Dorsolateral prefrontal cortex (tissue), 120 donors: ENCODE measurements at regions of chr11 and their contacts with region 1.

Region 1: GRCh38 chr11:65569973-65570918 is at the start of gene ZNRD2:
- DNase-seq: peak; percentile 97 to 99 (median 99)
- H3K4me3 ChIP-seq: peak within 1 kb of the TSS; percentile 68 to 99 (median 92)
- H3K27ac ChIP-seq: peak within 1 kb of the TSS; percentile 85 to 99 (median 96)
- H3K27me3 ChIP-seq: no peaks in the 10 kb centered on the region
- CTCF ChIP-seq: peak in 55 of 56 donors; percentile 44 to 84 (median 65)
- total RNA-seq, gene ZNRD2: 22.6 to 74.8 (median 38.1) TPM

Region 2: GRCh38 chr11:65261591-65262380 is 308.5 kb before region 1 on chr11 and contains the start of gene POLA2:
- intact Hi-C with region 1: no loop called
- DNase-seq: peak; percentile 79 to 93 (median 89)
- H3K4me3 ChIP-seq: peak within 1 kb of the TSS; percentile 52 to 98 (median 82)
- H3K27ac ChIP-seq: peak within 1 kb of the TSS; percentile 68 to 99 (median 92)
- H3K27me3 ChIP-seq: no peaks in the 10 kb centered on the region
- CTCF ChIP-seq: peak in 24 of 56 donors; percentile 0 to 52 (median 22)
- total RNA-seq, gene POLA2: 4.5 to 16.1 (median 8.9) TPM

Region 3: DNA sequence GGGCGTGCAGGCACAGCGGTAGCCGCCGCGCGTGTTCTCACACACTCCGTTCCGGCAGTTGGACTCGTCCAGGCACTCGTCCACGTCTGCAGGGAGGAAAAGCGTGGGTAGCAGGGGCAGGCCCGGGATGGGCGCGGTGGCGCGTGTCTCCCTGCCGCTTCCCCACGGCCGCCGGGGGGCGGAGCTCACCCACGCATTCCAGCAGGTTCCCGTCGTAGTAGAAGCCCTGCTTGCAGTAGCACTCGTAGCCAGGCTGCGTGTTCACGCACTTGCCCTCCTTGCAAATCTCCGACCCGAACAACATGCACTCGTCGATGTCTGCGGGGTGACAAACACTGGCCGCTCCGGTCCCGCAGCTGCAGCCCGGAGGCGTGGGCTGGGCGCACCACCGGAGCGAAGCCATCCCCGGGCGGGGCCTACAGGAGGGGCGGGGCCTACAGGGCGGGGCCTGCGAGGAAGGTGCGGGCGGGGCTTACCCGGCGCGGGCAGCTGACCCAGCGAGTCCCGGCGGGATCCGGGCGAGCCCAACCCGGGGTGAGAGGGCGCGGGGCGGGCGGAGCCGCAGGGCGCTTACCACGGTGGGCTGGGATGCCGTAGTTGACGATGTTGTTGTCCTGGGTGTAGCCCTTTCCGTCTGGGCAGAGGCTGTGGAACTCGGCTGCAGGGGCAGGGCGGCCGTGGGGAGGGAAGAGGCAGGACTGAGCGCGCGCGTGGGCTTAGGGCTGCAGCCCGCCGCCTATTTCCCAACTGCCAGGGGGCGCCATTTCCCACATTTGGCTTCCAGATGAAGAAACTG is 29.8 kb before region 1 on chr11:
- intact Hi-C with region 1: loop called (anchors 1 kb)
- DNase-seq: peak; percentile 81 to 94 (median 90)
- H3K4me3 ChIP-seq: peak overlapping the region; percentile 25 to 84 (median 59)
- H3K27ac ChIP-seq: peak overlapping the region; percentile 77 to 99 (median 94)
- H3K27me3 ChIP-seq: no peaks in the 10 kb centered on the region
- CTCF ChIP-seq: peak; percentile 63 to 95 (median 81)

Region 4: DNA sequence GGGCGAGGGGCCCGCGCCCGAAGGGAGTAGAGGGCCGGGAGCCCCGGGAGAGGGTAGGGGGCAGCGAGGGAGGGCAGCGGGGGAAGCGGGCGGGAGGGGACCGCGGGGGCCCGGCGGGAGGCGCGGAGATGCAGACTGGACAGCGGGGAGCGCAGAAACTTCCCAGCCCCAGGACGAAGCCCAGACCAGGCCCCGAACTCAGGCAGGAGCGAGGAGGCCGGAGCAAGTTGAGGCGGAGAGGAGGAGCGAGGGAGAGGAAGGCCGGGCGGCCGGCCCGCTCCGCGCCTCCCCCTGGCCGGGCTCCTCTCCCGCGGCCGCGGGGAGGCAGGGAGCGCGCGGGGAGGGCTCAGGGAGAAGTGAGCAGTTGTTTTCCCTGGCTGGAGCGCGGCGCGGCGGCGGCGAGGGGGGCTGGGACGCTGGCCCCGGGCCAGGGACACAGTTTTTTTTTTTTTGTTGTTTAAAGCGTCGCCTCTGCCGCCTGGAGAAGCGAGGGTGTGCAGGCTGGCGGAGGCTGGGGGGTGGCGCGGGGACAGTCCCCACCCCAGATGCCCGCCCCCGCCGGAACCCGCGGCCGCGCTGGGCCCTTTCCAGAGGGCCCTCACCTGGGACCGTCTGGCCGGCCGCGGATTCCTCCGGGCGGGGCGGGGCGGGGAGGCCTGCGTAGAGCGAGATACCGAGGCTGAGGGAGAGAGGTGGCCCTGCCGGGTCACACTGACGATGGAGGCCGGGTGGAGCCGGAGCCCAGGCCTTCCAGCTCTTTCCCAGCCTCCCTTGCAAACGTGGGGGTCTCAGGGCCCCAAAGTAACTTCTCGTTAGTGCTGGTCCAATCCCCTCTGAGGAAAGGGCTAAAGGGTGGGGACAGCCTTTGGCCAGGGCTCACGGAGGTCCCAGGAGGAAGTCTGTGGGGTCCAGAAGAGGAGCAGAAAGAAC is 12.0 kb before region 1 on chr11 and contains the start of gene LTBP3:
- intact Hi-C with region 1: loop called (anchors 1 kb)
- DNase-seq: peak; percentile 69 to 90 (median 80)
- H3K4me3 ChIP-seq: peak within 1 kb of the TSS; percentile 56 to 91 (median 70)
- H3K27ac ChIP-seq: peak within 1 kb of the TSS; percentile 80 to 100 (median 98)
- H3K27me3 ChIP-seq: no peaks in the 10 kb centered on the region
- CTCF ChIP-seq: peak in 45 of 56 donors; percentile 11 to 54 (median 34)
- total RNA-seq, gene LTBP3: 97.2 to 228 (median 145) TPM

Region 5: DNA sequence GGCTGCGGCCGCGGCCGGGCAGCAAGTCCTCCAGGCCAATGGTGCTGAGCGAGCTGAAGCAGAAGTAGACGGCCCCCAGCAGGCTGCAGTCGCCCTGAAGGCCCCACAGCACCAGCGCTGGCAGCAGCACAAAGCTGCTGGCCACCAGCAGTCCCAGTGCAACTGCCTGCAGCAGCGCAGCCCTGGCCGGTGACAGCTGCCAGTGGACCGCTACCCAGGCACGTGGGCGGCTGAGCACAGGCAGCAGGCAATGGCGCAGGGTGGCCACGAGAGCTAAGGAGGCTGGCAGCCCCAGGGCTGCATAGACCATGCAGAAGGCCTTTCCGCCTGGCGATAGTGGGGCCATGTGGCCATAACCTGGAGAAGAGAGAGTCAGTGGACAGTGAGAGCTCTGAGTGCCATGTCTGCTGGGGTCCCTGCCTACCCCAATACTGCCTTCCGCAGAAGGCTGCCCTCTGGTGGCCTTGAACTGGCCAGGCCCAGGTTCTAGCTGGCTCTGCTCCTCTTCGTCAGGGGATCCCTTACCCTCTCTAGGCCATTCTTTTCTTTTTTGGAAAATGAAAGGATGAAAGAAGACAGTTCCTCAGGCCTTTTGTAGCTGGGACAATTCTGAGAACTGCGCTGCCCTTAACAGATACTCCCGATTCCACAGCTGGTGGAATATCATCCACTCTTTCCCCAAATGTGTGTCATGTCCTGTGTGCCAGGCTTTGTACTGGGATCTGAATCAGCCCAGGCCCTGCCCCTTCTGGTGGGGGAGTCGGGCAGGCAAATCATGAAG is 23.5 kb after region 1 on chr11:
- intact Hi-C with region 1: loop called in 1 of 2 experiments (anchors 2 kb)
- DNase-seq: peak; percentile 61 to 80 (median 74)
- H3K4me3 ChIP-seq: peak overlapping the region in 31 of 59 donors; percentile 0 to 51 (median 24)
- H3K27ac ChIP-seq: peak overlapping the region in 58 of 59 donors; percentile 13 to 86 (median 72)
- H3K27me3 ChIP-seq: no peaks in the 10 kb centered on the region
- CTCF ChIP-seq: peak; percentile 59 to 92 (median 83)

Region 6: DNA sequence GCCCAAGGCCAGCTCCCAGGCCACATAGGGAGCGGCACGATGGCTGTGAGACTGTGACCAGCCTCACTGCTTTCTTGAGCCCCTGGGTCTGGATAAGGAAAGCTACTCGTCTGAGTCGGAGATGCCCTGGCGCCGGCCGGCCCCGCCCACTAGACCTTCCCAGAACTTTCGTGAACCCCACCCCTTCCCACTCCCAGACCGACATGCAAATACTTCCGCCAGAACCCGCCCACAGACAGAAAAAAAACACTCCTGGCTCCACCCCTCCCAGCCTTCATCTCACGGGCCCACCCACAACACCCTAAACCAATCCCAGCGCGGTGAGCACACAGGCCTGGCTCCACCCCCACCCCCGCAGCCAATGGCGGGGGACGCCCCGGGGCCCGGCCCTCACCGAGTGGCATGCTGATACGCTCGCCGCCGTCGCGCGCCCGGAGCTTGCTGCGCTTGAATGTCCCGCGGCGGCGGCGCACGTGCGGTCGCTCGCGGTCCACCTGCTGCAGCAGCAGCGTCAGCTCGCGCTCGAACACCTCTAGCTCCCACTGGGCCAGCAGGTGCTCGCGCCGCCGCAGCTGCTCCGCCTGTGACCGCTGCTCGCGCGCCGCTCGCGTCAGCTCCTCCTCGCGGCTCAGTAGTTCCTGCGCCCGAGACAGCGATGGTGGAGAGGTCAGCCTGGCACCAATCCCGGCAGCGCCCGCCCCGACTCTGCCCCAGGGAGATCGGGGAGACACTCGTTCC is 36.8 kb after region 1 on chr11:
- intact Hi-C with region 1: loop called in 1 of 2 experiments (anchors 2 kb)
- DNase-seq: peak; percentile 90 to 97 (median 96)
- H3K4me3 ChIP-seq: peak overlapping the region; percentile 9 to 68 (median 56)
- H3K27ac ChIP-seq: peak overlapping the region in 58 of 59 donors; percentile 26 to 100 (median 83)
- H3K27me3 ChIP-seq: no peaks in the 10 kb centered on the region
- CTCF ChIP-seq: peak in 14 of 56 donors; percentile 13 to 46 (median 24)